AG04449 (cell line): ENCODE measurements at regions of chr16 and their contacts with region 1.

Region 1: GRCh38 chr16:56866943-56867830 is 2.2 kb downstream of the SLC12A3 start:
- DNase-seq: no peak
- H3K4me3 ChIP-seq: no peak overlapping the region
- CTCF ChIP-seq: peak; percentile 49

Region 2: GRCh38 chr16:56715120-56715519 is 152.1 kb before region 1 on chr16:
- CTCF ChIA-PET with region 1: no interaction called
- POLR2A ChIA-PET with region 1: no interaction called
- DNase-seq: no peak
- H3K4me3 ChIP-seq: no peak overlapping the region
- CTCF ChIP-seq: no peak

Region 3: GRCh38 chr16:56814537-56815432 is 52.4 kb before region 1 on chr16:
- CTCF ChIA-PET with region 1: interaction called, 10 read pairs
- POLR2A ChIA-PET with region 1: no interaction called
- DNase-seq: no peak
- H3K4me3 ChIP-seq: no peak overlapping the region
- CTCF ChIP-seq: no peak

Region 4: GRCh38 chr16:56882077-56882800 is 15.1 kb after region 1 on chr16:
- CTCF ChIA-PET with region 1: interaction called, 26 read pairs
- POLR2A ChIA-PET with region 1: no interaction called
- DNase-seq: no peak
- H3K4me3 ChIP-seq: no peak overlapping the region
- CTCF ChIP-seq: no peak

Region 5: DNA sequence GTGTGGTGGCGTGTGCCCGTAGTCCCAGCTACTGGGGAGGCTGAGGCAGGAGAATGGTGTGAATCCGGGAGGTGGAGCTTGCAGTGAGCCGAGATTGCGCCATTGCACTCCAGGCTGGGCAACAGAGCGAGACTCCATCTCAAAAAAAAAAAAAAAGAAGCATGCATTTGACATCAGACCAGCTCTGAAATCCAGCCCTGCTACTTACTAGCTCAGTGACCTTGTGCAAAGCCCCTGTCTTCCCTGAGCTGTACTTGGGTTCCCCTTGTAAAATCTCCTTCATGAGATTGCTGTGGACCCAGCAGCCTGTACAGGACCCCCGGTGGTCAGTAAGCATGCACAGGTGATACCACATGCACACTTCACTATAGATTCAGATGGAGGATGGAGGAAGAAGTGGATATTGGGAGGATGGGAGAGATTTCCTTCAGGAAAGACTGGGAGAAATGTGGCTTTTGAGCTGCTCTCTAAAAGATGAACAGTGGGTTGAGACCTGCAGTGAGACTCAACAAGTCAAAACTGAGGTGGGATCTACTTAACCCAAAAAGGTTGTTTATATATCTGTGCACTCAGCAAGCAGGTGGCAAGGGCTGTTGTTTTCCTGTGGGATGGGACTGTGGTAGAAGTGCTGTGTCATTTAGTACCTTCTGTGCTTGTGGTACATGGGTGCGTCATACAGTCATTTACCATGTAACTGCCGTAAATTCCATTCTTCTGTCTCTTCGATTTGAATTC is 71.4 kb after region 1 on chr16:
- CTCF ChIA-PET with region 1: interaction called, 18 read pairs
- POLR2A ChIA-PET with region 1: no interaction called
- DNase-seq: no peak
- H3K4me3 ChIP-seq: no peak overlapping the region
- CTCF ChIP-seq: no peak

Region 6: DNA sequence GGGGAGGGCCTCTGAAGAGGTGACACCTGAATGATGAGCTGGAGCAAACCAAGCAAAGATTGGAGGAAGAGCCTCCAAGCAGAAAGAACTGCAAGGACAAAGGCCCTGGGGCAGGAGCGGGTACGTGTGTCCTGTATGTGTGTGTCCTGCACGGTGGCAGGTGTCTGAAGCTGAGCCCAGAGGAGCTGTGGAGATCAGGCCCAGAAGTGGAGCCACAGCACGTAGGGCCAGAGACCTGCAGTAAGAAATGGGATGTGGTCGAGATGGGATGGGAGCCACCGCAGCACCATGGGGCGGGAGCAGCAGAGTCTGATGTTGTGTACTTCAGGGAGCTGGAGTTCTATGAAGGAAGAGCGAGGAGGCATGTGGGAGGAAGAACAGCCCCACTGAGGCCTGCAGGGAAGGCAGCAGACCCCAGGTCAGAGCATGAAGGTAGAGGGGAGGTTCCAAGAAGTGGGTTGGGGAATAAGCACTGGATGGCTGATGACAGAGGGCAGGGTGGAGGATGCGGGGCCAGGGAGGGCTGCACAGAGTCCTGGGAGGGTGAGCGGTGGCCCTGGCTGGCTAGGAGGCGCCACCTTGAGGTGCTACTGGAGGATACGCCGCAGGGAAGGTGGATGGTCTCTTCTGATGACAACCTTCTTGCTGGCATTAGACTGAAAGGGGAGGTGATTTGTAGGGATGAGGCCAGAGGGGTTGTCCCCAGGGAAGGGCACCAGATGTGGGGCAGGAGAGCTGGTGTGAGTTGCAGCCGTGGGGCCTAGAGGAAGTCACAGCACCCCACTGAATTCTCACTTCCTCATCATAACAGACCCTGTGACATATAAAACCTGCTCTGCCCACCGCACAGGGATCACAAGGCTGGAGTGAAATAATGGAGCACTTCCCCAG is 83.9 kb after region 1 on chr16:
- CTCF ChIA-PET with region 1: interaction called, 99 read pairs
- POLR2A ChIA-PET with region 1: no interaction called
- DNase-seq: no peak
- H3K4me3 ChIP-seq: no peak overlapping the region
- CTCF ChIP-seq: peak; percentile 87

Region 7: GRCh38 chr16:57045694-57046381 is 178.7 kb after region 1 on chr16:
- CTCF ChIA-PET with region 1: interaction called, 20 read pairs
- POLR2A ChIA-PET with region 1: no interaction called
- DNase-seq: no peak
- H3K4me3 ChIP-seq: no peak overlapping the region
- CTCF ChIP-seq: peak; percentile 81